ENCODE measurements at regions of chr12 and their contacts with region 1.

Region 1: DNA sequence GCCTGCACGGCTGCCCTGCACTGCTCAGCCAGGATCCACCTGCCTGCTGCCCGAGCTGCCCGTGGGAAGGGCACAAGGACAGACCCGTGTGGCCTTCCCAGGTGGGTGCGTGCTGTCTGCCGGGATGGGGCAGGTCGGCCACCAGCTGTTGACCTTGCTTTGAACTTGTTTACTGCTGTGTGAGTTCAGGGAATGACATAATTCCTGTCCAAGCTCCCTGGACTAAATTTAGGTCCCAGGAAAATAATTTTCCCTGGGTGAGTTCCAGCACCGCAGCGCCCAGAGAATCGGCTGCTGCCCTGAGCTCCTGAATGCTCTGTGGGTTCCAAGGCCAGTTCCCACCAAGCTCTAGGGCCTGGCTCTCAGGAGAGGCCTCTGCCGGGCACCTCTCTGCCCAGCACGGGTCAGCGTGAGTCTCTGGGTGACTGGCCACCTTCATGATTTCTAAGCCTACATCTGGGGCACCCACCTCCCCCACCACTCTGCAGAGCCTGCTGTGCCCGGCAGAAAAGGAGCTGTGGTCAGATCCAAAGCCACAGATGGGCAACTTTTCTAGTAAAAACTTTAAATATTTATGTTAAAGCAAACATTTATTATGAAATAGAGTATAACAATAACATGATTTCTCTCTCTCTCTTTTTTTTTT is 27.2 kb upstream of the MLXIP start:
- DNase-seq: no peak
- CTCF ChIP-seq: no peak

Region 2: GRCh38 chr12:121992059-121992879 is 59.1 kb before region 1 on chr12:
- CTCF ChIA-PET with region 1: interaction called, 5 read pairs
- POLR2A ChIA-PET with region 1: interaction called, 15 read pairs
- DNase-seq: peak; percentile 84
- CTCF ChIP-seq: no peak

Region 3: DNA sequence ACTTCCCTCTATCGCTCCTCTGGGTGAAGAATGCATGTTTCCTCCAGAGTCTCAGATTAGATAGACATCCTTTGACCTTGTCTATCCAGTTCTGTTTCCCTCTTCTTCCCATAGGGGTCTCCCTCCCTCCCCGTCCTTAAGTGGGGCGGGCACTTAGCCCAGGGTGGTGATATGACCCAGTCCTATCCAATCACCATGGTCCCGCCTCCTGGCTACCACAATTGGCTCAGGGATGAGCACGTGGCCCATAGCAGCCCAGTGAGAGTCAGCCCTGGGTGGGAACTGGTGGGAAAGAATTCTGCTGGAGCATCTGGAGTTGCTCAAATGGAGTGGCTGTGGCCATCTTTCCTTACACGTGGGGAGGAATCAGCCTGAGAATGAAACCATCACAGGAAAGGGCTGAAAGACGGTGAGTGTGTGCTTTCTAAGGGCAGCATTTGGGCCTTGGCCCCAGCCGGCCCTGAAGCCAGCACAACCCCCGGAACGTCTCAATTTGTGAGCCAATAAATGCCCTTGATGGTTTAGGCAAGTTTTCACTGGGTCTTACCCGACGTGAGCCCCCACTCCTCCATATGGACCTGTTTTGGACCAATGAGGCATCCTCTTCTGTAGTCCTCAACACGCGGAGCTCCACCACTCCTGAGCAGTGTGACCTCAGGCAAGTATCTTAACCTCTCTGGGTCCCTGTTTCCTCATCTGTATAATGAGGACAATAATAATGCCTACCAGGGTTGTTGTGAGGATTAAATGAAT is 12.8 kb after region 1 on chr12:
- CTCF ChIA-PET with region 1: interaction called, 20 read pairs
- POLR2A ChIA-PET with region 1: no interaction called
- DNase-seq: peak; percentile 55
- CTCF ChIP-seq: peak; percentile 9

Region 4: DNA sequence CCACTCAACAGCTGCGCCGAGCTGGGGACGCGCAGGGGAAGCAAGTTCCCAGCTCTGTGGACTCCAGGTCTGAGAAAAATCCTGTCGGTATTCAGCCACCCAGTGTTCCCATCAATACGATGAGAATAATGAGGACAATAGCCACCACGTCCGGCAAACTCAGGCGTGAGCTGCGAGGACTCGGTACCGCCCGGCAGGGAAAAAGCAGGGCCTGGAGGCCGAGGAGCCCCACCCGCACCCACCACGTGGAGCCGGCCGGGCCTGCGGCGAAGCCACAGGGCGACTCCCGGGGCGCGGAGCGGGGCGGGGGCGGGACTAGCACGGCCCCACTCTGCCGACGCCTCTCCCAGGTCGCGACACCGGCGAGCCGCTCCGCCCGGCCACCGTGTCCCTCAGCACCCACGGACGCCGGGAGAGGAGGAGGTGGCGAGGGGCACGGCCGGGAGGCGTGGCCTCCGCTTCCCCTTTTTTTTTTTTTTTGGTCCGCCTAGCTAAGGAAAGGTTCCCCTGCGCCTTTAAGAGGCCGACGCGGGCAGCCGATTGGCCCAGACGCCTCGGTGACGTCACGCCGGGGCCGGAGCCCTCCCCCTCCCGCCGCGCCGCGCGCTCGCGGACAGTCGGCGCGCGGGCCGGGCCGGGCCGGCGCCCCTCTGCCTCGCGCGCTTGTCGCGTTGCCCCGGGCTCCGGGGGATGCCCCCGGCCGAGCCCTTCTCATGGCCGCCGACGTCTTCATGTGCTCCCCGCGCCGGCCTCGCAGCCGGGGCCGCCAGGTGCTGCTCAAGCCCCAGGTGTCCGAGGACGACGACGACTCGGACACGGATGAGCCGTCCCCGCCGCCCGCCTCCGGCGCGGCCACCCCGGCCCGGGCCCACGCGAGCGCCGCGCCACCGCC is 27.0 kb after region 1 on chr12 and contains the start of gene MLXIP:
- CTCF ChIA-PET with region 1: interaction called, 12 read pairs
- POLR2A ChIA-PET with region 1: no interaction called
- DNase-seq: peak; percentile 96
- CTCF ChIP-seq: no peak

Region 5: DNA sequence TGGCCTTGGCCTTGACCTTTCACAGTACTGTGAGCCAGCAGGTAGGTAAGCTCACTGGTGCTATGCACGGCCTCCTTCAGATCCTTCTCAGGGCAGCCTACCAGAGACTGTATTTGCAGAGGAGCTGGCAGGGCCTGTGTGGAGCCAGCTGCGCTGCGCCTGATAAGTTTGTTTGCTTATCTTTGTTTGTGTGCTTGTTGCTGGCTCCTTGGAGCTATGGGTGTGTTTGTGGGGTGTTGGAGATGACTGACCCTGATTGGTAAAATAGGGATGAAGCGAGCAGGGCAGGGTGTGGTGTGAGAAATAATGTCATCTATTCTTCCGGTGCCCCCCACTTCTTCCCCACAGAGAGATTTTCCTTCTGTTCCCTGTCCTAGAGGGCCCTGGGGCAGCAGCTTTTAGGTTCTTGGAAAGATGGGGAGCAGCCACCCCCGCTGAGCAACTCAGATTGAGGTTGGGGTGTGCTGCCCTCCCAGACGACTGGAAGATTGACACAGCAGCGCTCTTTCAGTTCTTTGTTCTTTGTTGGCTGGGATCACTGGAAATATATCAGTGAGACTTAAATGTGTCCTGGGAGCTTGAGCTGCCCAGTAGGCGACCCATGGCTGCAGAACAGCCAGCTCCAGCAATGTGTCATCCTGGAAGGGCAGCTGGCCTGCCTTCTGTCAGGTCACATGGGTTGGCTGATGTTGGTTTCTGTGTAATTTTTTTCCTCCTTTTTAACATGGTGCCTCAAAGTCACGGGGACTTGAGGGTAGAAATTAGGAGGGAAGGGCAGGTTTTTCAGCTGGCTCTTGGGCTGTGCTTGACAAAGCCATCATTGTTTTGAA is 46.8 kb after region 1 on chr12:
- CTCF ChIA-PET with region 1: interaction called, 20 read pairs
- POLR2A ChIA-PET with region 1: no interaction called
- DNase-seq: no peak
- CTCF ChIP-seq: no peak

Region 6: GRCh38 chr12:122130150-122130549 is 78.8 kb after region 1 on chr12:
- CTCF ChIA-PET with region 1: interaction called, 209 read pairs
- POLR2A ChIA-PET with region 1: no interaction called
- DNase-seq: no peak
- CTCF ChIP-seq: no peak

Region 7: DNA sequence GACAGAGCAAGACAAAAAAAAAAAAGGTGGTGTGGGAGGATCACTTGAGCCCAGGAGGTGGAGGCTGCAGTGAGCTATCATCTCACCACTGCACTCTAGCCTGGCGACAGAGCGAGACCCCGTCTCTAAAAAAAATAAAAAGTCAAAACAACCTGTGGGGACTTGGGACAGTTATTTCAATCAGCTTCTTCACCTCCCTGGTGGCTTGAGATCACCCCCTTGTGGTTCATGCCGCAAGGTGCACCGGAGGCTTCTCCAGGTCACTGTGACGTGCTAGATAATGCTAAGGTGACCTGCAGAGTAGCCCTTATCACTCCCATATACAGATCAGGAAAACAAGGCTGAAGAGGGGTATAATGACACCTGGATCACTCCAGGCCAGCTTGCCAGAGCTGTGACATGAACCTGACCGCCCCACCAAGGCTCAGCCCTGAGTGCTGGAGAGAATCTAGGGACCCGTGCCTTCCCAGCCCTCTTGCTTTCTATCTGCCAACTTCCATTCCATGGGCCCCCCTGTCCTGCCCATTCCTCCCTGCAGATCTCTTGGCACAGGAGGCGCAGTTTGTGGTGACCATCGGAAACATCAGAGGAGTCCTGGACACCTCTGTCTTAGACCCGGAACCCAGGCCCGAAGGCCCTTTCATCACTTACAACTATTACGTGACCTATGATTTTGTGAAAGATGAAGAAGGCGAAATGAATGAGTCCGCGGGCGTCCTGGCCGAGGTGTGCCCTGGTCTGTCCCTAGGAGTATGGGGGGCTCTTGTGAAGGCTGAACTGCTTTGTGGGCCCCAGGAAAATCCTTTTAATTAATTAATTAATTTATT is 139.7 kb after region 1 on chr12:
- CTCF ChIA-PET with region 1: interaction called, 10 read pairs
- POLR2A ChIA-PET with region 1: no interaction called
- DNase-seq: peak; percentile 86
- CTCF ChIP-seq: peak; percentile 87

Measured in GM10248 (cell line).